OCI-LY7 (cell line): ENCODE measurements at regions of chr3 and their contacts with region 1.

Region 1: DNA sequence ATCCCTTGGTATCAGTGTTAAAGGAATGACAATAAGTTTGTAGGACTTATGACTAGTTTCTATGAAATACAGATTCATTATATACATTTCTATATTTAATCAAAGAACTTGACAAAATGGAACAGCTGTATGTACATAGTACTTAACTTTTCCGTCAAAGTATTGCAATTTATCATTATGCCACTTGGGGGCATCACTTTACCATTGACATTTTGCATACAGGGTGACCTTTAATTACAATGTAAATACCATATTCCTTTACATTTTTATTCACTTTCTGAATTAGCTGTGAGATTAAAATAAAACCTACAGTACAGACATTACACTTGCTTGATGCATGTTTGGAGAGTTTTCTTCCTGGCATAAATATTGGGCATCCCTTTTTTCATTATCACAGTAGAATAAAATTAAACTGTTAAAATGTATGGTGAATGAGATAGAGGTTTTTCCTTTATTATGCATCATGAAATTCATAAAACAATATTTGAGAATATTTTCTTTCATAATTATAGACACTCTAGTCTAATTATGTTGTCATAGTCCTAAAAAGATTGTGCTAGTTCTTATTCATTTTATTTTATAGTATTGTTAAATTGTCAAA is 6.9 kb downstream of the NEK11 start:
- DNase-seq: peak; percentile 55
- H3K4me3 ChIP-seq: no peak overlapping the region
- H3K27ac ChIP-seq: no peak overlapping the region
- H3K4me1 ChIP-seq: no peaks in the 10 kb centered on the region
- CTCF ChIP-seq: peak; percentile 92

Region 2: DNA sequence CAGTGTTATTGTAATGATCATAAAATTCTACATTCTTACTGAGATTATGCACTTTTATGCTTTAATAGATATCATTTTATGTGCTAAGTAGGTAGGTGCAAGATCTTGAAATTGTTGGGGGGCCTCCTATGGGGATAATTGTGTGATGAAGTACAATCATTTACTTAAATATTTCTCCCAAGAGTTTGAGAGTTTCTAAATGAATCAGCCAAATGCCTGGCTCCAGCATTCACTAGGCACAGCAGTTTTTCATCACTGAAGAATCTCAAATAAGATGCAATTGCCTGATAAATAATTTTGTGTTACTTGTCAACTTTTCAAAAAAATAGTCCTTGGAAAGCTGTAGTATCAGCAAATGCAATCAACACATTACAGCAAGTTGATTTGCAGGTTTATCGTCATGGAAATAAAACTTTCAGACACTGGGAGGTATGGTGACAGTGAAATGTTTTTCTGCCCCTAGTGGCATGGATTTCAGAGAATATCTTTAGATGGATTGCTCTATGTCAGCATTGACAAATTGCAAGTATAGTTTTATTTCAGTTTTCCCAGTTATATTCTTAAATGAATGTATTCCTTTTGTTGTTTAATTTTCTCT is 160.2 kb after region 1 on chr3:
- CTCF ChIA-PET with region 1: no interaction called
- POLR2A ChIA-PET with region 1: no interaction called
- intact Hi-C with region 1: loop called (anchors 10 kb)
- DNase-seq: no peak
- H3K4me3 ChIP-seq: no peak overlapping the region
- H3K27ac ChIP-seq: no peak overlapping the region
- H3K4me1 ChIP-seq: no peaks in the 10 kb centered on the region
- CTCF ChIP-seq: 0 out of 2 replicates have a peak, but pooled peaks have one; percentile 33